IMR-90 (cell line): ENCODE measurements at regions of chr12 and their contacts with region 1.

Region 1: DNA sequence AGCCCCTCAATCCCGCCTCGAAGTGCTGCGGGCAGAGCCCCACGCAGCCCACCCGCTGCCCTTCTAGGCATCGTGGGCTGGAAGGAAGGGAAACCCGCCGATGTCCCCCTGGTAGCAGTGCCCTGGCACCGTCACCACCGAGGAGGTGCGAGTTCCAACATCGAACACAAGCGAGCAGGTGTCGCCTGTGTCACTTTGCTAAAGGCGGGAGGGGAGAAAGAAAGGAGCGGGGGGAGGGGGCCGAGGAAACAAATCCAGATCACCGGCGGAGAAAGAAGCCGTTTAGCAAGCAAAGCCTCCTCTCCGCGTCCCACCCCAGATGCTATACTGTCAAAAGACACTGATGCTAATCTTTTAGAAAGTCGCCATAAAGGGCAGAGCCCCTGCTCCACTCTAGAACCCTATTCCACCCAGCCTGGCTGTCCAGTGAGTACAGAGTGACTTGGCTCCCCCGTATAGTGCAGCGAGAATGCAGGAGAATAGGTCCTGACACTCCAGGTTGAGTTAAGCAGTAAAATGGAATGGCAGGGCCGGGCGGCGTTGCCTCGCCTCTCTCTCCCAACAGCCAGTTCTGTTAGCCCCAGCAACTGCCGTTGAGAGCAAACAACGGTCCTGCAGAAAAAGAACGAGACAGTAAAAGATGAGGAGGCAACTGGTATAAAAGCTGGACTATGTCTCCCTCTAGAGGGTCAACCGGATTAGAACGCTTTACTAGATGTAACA is 67.9 kb upstream of the USP15 start:
- DNase-seq: peak; percentile 82
- ATAC-seq: peak; percentile 96
- H3K4me3 ChIP-seq: peak overlapping the region; percentile 9
- H3K27ac ChIP-seq: no peak overlapping the region
- H3K4me1 ChIP-seq: peaks cover 2% of the 10 kb centered on the region; the same call in 1 of the 2 replicates
- H3K27me3 ChIP-seq: peaks cover 31% of the 10 kb centered on the region
- CTCF ChIP-seq: peak; percentile 86
- POLR2A ChIP-seq: no peak
- RAD21 ChIP-seq: peak; percentile 85

Region 2: DNA sequence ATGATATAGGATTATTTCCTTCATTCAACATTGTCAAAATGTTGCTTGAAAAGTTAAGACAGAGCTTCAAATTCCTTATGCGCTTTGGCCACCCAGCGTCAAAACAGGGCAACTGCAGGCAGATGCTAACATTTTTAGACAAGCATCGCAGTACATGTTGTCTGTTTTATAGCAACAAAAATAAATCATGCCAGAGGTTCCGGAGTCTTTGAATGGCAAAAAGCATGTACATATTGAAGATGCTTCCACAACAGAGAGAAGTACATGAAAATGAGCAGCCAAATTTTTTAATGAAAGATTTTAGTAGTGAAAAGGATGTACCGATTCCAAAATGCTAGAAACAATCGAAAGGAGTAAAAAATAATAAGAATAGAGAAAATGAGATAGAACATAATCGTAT is 18.1 kb after region 1 on chr12:
- CTCF ChIA-PET with region 1: interaction called, 14 read pairs
- POLR2A ChIA-PET with region 1: no interaction called
- dilution Hi-C with region 1: no loop called
- in situ Hi-C with region 1: no loop called
- intact Hi-C with region 1: no loop called
- DNase-seq: peak; percentile 52
- ATAC-seq: peak; percentile 75
- H3K4me3 ChIP-seq: no peak overlapping the region
- H3K27ac ChIP-seq: no peak overlapping the region
- H3K4me1 ChIP-seq: no peaks in the 10 kb centered on the region
- H3K27me3 ChIP-seq: no peaks in the 10 kb centered on the region
- CTCF ChIP-seq: peak; percentile 69
- POLR2A ChIP-seq: no peak
- RAD21 ChIP-seq: peak; percentile 34; the same call in 1 of the 2 replicates